Calu3 (cell line): ENCODE measurements at regions of chr5 and their contacts with region 1.

Region 1: GRCh38 chr5:140401362-140402257 is at the start of gene ANKHD1:
- DNase-seq: peak; percentile 99
- H3K4me3 Mint-ChIP-seq: no peak within 1 kb of the TSS
- H3K27ac Mint-ChIP-seq: no peak within 1 kb of the TSS
- H3K4me1 Mint-ChIP-seq: peaks cover 20% of the 10 kb centered on the region
- H3K27me3 Mint-ChIP-seq: no peaks in the 10 kb centered on the region
- CTCF ChIP-seq: no peak
- total RNA-seq, gene ANKHD1: 160 and 167 TPM in 2 replicates

Region 2: DNA sequence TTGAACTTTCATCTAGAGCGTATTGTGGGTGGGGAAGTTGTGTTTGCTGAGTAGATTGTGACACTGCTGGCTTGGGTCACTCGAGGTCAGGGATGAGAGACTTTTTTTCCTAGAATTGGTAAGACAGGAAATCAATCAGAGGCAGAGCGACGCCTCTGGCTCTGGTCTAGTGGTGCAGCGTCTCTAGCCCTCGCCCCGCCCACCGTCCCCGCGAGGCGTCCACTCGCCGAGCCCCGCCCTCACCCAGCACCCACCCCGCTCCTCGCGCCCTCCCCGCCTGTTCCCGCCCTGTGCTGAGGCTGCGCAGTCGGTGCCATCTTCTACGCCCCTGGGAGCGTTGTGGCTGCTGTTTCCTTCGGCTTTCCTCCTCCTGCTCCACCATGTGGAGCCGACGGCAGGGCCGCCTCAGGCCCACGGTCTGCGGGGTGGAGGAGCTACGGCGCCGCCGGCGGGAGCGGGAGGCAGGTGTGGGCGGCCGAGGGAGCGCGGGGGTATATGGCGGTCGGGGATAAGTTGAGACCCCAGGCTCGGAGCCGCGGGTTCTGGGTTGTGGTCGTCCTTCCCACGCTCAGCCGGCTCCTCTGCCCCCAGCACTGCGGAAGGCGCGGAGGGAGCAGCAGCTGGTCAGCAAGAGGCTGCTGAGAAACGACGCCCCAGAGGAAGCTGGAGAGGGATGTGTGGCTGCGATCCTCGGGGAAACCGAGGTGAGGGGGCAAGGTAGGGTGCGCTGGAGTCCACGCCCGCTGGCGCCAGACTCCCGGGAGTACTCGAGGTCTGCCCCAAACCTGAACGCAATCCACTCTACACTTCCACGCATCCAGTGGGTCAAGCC is 237.8 kb after region 1 on chr5 and contains the start of gene TMCO6:
- CTCF ChIA-PET with region 1: no interaction called
- intact Hi-C with region 1: loop called (anchors 10 kb)
- DNase-seq: peak; percentile 99
- H3K4me3 Mint-ChIP-seq: peak within 1 kb of the TSS; percentile 96
- H3K27ac Mint-ChIP-seq: peak within 1 kb of the TSS; percentile 90
- H3K4me1 Mint-ChIP-seq: peaks cover 35% of the 10 kb centered on the region
- H3K27me3 Mint-ChIP-seq: no peaks in the 10 kb centered on the region
- CTCF ChIP-seq: peak; percentile 72
- total RNA-seq, gene TMCO6: 28.5 and 30.9 TPM in 2 replicates